Aorta (tissue), 5 donors: ENCODE measurements at regions of chr11 and their contacts with region 1.

Region 1: GRCh38 chr11:76654298-76654851 is 16.2 kb downstream of the LRRC32 start:
- DNase-seq: peak; percentile 88 to 92
- ATAC-seq: peak; percentile 87
- H3K4me3 ChIP-seq: no peak overlapping the region
- H3K27ac ChIP-seq: peak overlapping the region; percentile 69 to 93
- H3K4me1 ChIP-seq: peaks cover 0 to 2% of the 10 kb centered on the region in 2 donors
- H3K27me3 ChIP-seq: no peaks in the 10 kb centered on the region

Region 2: GRCh38 chr11:76610871-76611475 is 43.4 kb before region 1 on chr11:
- intact Hi-C with region 1: loop called (anchors 2 to 5 kb)
- DNase-seq: peak; percentile 64 to 70
- ATAC-seq: no peak
- H3K4me3 ChIP-seq: no peak overlapping the region
- H3K27ac ChIP-seq: peak overlapping the region in 1 of 2 donors; percentile 70
- H3K4me1 ChIP-seq: peaks cover 0 to 5% of the 10 kb centered on the region in 2 donors
- H3K27me3 ChIP-seq: no peaks in the 10 kb centered on the region

Region 3: DNA sequence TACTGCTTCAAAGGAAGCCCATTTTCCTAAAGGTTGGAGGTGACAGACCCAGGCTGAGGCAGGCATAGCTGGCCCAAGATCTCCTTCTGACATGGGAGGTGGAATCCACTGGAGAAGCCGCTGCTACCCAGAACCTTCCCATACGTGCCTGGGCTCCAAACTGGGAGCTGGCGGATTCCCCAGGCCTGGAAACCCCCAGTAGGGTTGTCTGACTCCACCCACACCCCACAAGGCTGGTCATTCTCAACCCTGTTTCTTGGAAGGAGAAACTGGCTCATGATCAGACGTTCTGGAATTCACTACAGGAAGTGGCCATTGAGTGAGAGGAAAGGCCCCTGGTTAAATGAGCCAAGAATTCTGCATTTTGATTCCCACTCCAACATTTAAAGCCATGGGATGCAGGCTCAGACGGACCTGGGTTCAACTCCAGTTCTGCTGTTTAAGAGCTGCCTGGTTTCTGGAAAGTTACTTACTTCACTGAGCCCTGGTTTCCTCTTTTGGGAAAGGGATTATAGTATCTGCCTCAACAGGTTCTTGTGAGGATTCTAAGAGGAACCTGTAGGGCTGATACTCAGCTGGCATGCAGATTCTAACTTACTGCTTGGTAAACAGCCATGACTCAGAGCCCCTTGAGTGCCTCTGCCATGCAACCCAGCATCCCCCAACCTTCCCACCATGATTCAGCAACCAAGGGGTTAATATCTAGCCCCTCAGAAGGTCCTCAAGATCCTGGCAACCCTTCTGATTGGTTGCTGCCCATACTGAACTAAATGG is 109.4 kb after region 1 on chr11:
- intact Hi-C with region 1: no loop called
- DNase-seq: peak; percentile 78 to 81
- ATAC-seq: peak; percentile 71
- H3K4me3 ChIP-seq: no peak overlapping the region
- H3K27ac ChIP-seq: no peak overlapping the region
- H3K4me1 ChIP-seq: no peaks in the 10 kb centered on the region
- H3K27me3 ChIP-seq: no peaks in the 10 kb centered on the region

Region 4: GRCh38 chr11:77799338-77799737 is 1145.0 kb after region 1 on chr11:
- intact Hi-C with region 1: no loop called
- DNase-seq: no peak
- ATAC-seq: no peak
- H3K4me3 ChIP-seq: no peak overlapping the region
- H3K27ac ChIP-seq: no peak overlapping the region
- H3K4me1 ChIP-seq: no peaks in the 10 kb centered on the region
- H3K27me3 ChIP-seq: no peaks in the 10 kb centered on the region